ENCODE measurements at regions of chr5 and their contacts with region 1.

Region 1: DNA sequence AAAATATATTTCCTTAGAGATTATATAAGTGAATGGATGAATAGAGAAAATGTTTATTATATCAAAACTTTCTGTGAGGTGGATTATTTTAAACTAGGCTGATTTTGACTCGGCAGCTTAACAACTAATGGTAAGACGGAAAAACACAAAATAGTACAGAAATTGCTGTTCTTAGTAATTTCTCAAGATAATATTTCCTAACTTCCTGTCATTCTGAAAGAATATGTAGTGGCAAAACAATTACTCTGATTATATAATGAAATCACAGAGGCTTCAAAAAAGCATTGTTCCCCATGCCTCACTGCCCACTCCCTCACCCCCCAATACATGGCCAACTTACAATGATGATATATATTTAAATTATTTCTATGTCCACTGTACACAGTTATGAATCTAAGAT is 85.4 kb downstream of the YTHDC2 start:
- DNase-seq: no peak
- ATAC-seq: no peak
- H3K4me3 ChIP-seq: no peak overlapping the region
- H3K27ac ChIP-seq: no peak overlapping the region
- H3K4me1 ChIP-seq: no peaks in the 10 kb centered on the region
- H3K27me3 ChIP-seq: no peaks in the 10 kb centered on the region; the same call in 1 of the 2 replicates
- CTCF ChIP-seq: no peak

Region 2: DNA sequence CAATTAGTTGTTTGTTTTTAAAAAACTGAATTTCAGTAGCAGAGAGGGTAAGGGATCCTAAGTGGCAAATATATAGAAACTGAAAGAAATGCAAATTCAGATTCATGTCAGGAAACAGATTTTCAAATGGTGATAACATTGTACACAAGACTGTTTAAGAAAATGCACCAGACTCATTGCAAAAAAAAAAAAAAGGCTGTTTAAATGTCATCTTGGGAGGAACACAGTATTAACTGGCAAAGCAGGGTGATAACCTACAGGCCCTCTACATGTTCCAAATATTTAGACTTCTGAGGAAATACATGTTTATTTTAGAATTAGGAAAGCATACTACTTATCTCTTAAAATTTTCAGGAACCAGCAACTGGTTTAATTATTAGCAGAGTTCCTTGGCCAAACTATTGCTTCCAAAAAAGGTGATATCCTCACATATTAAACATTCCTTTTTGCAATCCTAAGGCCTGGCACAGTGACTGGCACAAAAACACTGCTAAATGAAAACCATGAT is 278.6 kb before region 1 on chr5:
- CTCF ChIA-PET with region 1: no interaction called
- POLR2A ChIA-PET with region 1: no interaction called
- in situ Hi-C with region 1: no loop called
- intact Hi-C with region 1: no loop called
- DNase-seq: no peak
- ATAC-seq: no peak
- H3K4me3 ChIP-seq: no peak overlapping the region
- H3K27ac ChIP-seq: no peak overlapping the region
- H3K4me1 ChIP-seq: no peaks in the 10 kb centered on the region
- H3K27me3 ChIP-seq: no peaks in the 10 kb centered on the region
- CTCF ChIP-seq: no peak

Region 3: DNA sequence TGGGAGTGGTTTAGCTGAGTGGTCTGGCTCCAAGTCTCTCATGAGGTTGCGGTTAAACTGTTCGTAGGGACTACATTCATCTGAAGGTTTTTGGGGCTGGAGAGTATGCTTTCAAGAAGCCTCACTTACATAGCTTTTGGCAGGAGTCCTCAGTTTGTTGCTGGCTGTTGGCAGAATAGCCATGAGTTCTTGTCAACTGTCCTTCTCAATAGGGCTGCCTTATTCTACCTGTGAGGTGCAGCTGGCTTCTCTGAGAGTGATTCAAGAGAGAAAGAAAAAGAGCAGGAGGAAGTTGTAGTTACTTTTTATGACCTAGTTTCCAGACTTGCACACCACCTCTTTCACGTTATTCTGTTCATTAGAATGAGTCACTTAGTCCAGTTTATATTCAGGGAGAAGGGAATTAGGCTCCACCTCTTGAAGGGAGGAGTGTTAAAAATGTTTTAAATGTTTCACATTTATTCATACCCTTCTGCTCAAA is 52.2 kb before region 1 on chr5:
- CTCF ChIA-PET with region 1: no interaction called
- POLR2A ChIA-PET with region 1: interaction called, 15 read pairs
- in situ Hi-C with region 1: no loop called
- intact Hi-C with region 1: no loop called
- DNase-seq: no peak
- ATAC-seq: no peak
- H3K4me3 ChIP-seq: no peak overlapping the region
- H3K27ac ChIP-seq: no peak overlapping the region
- H3K4me1 ChIP-seq: no peaks in the 10 kb centered on the region
- H3K27me3 ChIP-seq: no peaks in the 10 kb centered on the region
- CTCF ChIP-seq: no peak

Region 4: DNA sequence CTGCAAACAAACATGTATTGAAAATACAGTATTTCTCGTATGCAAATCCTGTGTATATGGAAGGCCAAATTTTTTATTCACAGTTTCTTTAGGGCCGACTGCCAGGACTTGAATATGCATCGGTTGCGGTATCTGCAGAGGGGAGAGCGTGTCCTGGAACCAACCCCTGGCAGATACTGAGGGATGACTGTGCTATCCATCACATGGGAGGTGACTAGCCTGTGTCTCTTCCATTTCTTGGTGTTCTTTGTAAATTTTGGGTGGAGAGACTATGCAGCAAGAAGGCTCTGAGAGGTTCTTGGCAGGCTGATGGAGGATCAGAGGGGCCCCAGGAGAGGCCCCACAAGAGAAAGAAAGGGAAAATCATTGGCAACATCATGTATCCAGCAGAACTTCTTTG is 298.8 kb after region 1 on chr5:
- CTCF ChIA-PET with region 1: no interaction called
- POLR2A ChIA-PET with region 1: no interaction called
- in situ Hi-C with region 1: no loop called
- intact Hi-C with region 1: no loop called
- DNase-seq: no peak
- ATAC-seq: no peak
- H3K4me3 ChIP-seq: no peak overlapping the region
- H3K27ac ChIP-seq: no peak overlapping the region
- H3K4me1 ChIP-seq: no peaks in the 10 kb centered on the region
- H3K27me3 ChIP-seq: no peaks in the 10 kb centered on the region
- CTCF ChIP-seq: no peak